Endothelial cell of umbilical vein (primary cell): ENCODE measurements at regions of chr1 and their contacts with region 1.

Region 1: DNA sequence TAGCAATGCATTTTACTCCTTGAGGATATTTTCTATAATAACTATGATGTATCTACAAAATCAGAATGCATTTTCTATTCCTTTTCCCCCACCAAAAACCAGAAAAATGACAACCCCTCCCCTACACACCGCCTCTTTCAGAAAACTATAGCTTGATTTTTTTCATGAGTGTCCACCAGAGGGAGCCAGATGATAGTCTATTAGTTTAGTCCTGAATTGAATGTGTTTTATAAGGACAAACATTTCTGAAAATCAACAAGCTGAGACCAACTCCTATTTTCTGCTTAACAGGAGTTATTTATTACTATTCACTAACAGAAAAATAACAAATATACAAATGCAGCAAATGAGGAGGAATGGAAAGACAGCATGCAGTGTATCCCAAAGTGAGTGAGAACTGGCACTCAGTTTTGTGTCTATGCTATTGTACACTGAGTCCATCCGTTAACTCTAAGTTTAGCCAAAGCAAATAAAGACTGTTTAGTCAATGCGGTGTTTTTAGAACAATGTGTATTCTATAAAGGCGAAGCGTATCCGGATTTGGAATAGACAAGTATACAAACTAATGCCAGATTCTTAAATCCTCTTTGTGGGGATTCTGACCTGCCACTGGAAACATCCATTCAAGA is 182.6 kb downstream of the VAV3 start:
- DNase-seq: peak; percentile 71
- H3K4me3 ChIP-seq: no peak overlapping the region
- H3K27ac ChIP-seq: no peak overlapping the region
- H3K4me1 ChIP-seq: peaks cover 6% of the 10 kb centered on the region
- H3K27me3 ChIP-seq: no peaks in the 10 kb centered on the region
- CTCF ChIP-seq: peak; percentile 17 to 41
- POLR2A ChIP-seq: no peak

Region 2: GRCh38 chr1:107795994-107796393 is 13.7 kb after region 1 on chr1:
- CTCF ChIA-PET with region 1: interaction called, 47 read pairs
- POLR2A ChIA-PET with region 1: no interaction called
- dilution Hi-C with region 1: no loop called
- intact Hi-C with region 1: no loop called
- DNase-seq: no peak
- H3K4me3 ChIP-seq: no peak overlapping the region
- H3K27ac ChIP-seq: no peak overlapping the region
- H3K4me1 ChIP-seq: no peaks in the 10 kb centered on the region
- H3K27me3 ChIP-seq: peaks cover 0 to 2% of the 10 kb centered on the region in 2 experiments
- CTCF ChIP-seq: no peak
- POLR2A ChIP-seq: no peak

Region 3: GRCh38 chr1:108009603-108010195 is 227.4 kb after region 1 on chr1:
- CTCF ChIA-PET with region 1: interaction called, 10 read pairs
- POLR2A ChIA-PET with region 1: no interaction called
- dilution Hi-C with region 1: no loop called
- intact Hi-C with region 1: no loop called
- DNase-seq: no peak
- H3K4me3 ChIP-seq: no peak overlapping the region
- H3K27ac ChIP-seq: no peak overlapping the region
- H3K4me1 ChIP-seq: no peaks in the 10 kb centered on the region
- H3K27me3 ChIP-seq: no peaks in the 10 kb centered on the region
- CTCF ChIP-seq: no peak
- POLR2A ChIP-seq: no peak

Region 4: DNA sequence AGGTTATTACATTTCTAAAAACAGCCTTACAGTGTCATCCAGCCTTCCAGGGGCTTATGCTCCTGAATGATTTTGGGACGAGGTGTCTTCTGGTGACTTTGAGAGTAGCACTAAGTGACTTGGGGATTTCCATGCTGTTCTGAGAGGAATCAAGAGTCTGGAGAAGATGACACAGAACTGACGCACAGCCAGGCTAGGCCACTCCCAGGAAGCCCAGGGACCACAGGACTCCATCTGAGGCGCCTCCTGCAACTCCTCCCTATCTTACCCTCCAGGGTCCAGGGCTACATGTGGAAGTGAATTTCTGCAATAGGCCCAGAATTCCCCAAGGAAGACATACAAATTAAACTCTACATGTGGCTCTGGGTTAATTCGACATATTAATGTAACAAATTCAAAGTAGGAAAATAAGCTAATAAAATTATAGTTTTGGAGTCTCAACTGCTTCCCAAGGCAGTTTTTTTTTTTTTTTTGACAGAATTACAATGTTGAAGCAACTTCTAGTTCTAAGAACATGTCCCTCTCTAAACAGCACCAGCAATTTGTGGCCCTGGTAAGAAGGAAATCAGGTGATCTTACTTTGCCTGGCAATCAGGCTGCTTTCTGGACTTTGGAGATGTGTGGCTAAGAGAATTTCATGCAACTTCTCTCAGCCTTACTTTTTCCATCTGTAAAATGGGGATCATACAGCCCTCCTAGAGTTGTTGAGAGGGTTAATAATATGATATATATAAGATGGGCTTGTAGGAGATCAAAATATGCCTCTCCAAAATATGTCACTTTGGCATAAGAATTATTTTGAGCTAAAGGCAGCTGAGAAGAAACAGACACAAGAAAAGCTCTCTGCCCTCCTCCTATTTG is 325.6 kb after region 1 on chr1:
- CTCF ChIA-PET with region 1: interaction called, 12 read pairs
- POLR2A ChIA-PET with region 1: no interaction called
- dilution Hi-C with region 1: no loop called
- intact Hi-C with region 1: no loop called
- DNase-seq: no peak
- H3K4me3 ChIP-seq: no peak overlapping the region
- H3K27ac ChIP-seq: no peak overlapping the region
- H3K4me1 ChIP-seq: no peaks in the 10 kb centered on the region
- H3K27me3 ChIP-seq: no peaks in the 10 kb centered on the region
- CTCF ChIP-seq: no peak
- POLR2A ChIP-seq: no peak

Region 5: GRCh38 chr1:108125312-108126138 is 343.2 kb after region 1 on chr1:
- CTCF ChIA-PET with region 1: interaction called, 919 read pairs
- POLR2A ChIA-PET with region 1: interaction called, 3 read pairs
- dilution Hi-C with region 1: no loop called
- intact Hi-C with region 1: loop called (anchors 1 kb)
- DNase-seq: peak; percentile 78
- H3K4me3 ChIP-seq: no peak overlapping the region
- H3K27ac ChIP-seq: no peak overlapping the region
- H3K4me1 ChIP-seq: no peaks in the 10 kb centered on the region
- H3K27me3 ChIP-seq: no peaks in the 10 kb centered on the region
- CTCF ChIP-seq: peak; percentile 86
- POLR2A ChIP-seq: no peak

Region 6: DNA sequence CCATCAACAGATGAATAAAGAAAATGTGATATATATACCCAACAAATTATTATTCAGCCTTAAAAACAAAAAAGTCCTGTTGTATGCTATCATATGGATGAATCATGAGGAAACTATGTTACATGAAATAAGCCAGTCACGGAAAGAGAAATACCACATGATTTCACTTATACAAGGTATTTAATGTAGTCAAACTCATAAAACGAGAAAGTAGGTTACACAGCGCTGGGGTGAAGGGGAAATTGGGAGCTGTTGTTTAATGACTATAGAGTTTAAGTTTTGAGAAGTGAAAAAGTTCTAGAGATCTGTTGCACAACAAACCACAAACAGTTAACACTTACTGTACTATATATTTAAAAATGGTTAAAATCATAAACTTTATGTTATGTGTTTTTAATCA is 359.3 kb after region 1 on chr1:
- CTCF ChIA-PET with region 1: interaction called, 11 read pairs
- POLR2A ChIA-PET with region 1: no interaction called
- dilution Hi-C with region 1: no loop called
- intact Hi-C with region 1: no loop called
- DNase-seq: no peak
- H3K4me3 ChIP-seq: no peak overlapping the region
- H3K27ac ChIP-seq: no peak overlapping the region
- H3K4me1 ChIP-seq: peaks cover 2% of the 10 kb centered on the region
- H3K27me3 ChIP-seq: no peaks in the 10 kb centered on the region
- CTCF ChIP-seq: no peak
- POLR2A ChIP-seq: no peak

Region 7: GRCh38 chr1:108199781-108200570 is 417.6 kb after region 1 on chr1 and contains the start of gene SLC25A24:
- CTCF ChIA-PET with region 1: interaction called, 14 read pairs
- POLR2A ChIA-PET with region 1: no interaction called
- dilution Hi-C with region 1: no loop called
- intact Hi-C with region 1: no loop called
- DNase-seq: peak; percentile 73
- H3K4me3 ChIP-seq: peak within 1 kb of the TSS; percentile 84 to 95 (median 87)
- H3K27ac ChIP-seq: peak within 1 kb of the TSS; percentile 93
- H3K4me1 ChIP-seq: peaks cover 23% of the 10 kb centered on the region
- H3K27me3 ChIP-seq: no peaks in the 10 kb centered on the region
- CTCF ChIP-seq: no peak
- POLR2A ChIP-seq: no peak
- total RNA-seq, gene SLC25A24: 44.5 and 45.8 TPM in 2 replicates